Sigmoid colon (tissue), 7 donors: ENCODE measurements at regions of chr7 and their contacts with region 1.

Region 1: GRCh38 chr7:42453931-42454361 is 216.9 kb upstream of the GLI3 start:
- DNase-seq: no peak
- H3K4me3 ChIP-seq: no peak overlapping the region
- H3K27ac ChIP-seq: peak overlapping the region in 3 of 4 donors; percentile 64 to 79 (median 64)
- H3K4me1 ChIP-seq: peaks cover 0 to 37% (median 27%) of the 10 kb centered on the region in 4 donors
- H3K27me3 ChIP-seq: no peaks in the 10 kb centered on the region
- CTCF ChIP-seq: no peak
- EP300 ChIP-seq: peak in 3 of 4 donors; percentile 17 to 67 (median 34)
- POLR2A ChIP-seq: no peak

Region 2: DNA sequence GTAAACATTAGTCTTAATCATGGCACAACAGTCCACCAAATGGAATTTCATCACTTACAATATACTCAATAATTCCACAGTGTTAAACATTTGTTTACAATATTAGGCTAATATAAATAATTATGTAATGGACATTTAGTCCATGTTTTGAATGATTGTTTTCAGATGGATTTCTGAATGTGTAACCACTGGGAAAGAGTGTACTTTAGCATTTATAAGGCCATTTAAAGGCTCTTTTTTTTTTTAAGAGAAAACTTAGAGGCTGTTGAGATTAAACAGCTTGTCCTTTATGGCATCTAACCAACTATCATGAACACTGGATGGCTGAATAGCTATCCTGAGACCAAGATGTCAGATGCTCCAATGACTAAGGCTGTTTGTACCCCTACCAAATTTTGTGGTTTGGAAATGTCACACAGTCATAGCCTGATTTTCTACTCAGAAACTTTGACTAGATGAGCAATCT is 31.4 kb after region 1 on chr7:
- intact Hi-C with region 1: loop called (anchors 5 kb)
- DNase-seq: no peak
- H3K4me3 ChIP-seq: no peak overlapping the region
- H3K27ac ChIP-seq: peak overlapping the region in 3 of 4 donors; percentile 62 to 68 (median 65)
- H3K4me1 ChIP-seq: peaks cover 0 to 59% (median 43%) of the 10 kb centered on the region in 4 donors
- H3K27me3 ChIP-seq: no peaks in the 10 kb centered on the region
- CTCF ChIP-seq: no peak
- EP300 ChIP-seq: peak in 1 of 4 donors; percentile 13
- POLR2A ChIP-seq: no peak